Activated CD4-positive, alpha-beta T cell treated with anti-CD3 and anti-CD28 coated beads for 36 hours (primary cell): ENCODE measurements at regions of chr22 and their contacts with region 1.

Region 1: GRCh38 chr22:41543854-41544670 is at the start of gene POLR3H:
- DNase-seq: peak; percentile 99
- ATAC-seq: peak; percentile 99
- H3K4me3 Mint-ChIP-seq: peak within 1 kb of the TSS; percentile 81
- H3K27ac Mint-ChIP-seq: peak within 1 kb of the TSS; percentile 90
- H3K4me1 Mint-ChIP-seq: peaks cover 40% of the 10 kb centered on the region
- H3K27me3 Mint-ChIP-seq: no peaks in the 10 kb centered on the region
- total RNA-seq, gene POLR3H: 18.3 to 24.6 TPM

Region 2: DNA sequence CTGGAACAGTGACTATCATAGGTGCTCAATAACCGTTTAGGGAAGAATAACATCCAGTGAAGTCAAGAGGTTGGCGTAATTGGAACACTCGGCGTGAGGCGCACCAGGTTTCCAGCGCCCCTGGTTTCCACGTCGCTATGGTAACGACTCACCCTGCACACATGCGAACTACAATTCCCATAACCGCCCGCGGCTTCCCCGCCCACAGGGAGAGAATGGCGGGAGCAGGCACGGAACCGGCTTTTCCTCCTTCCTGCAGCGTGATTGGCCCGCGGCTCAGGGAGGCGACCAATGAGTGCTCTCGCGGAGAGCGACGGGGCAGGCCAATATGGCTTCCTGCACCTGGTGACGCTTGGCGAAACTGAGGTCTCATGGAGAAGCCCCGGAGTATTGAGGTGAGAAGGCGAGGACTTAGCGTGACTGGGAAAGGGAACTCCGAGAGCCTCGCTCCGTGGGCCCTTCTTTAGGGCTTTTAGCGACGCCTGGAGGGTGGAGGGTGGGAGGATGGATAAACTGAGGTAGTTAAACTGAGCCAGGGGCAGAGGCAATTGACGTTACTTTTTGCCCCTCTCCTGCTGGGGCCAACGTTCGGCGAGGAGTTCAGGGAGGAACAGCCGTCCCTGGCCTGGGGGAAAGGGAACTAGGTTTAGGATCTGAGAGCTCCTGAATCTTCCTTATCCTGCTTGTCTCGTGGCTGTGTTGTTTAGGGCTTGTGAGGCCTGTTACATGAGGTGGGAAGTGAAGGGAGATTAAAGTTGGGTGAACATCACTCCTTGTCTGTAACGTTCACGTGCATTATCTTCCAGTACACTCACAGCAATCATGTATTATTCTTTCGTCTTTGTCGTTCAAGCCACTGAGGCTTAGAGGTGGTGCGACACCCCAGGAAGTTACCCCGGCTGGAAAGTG is 338.8 kb before region 1 on chr22 and contains the start of gene L3MBTL2:
- CTCF ChIA-PET with region 1: no interaction called
- POLR2A ChIA-PET with region 1: no interaction called
- intact Hi-C with region 1: loop called in 1 of 2 experiments (anchors 1 kb)
- DNase-seq: peak; percentile 100
- ATAC-seq: peak; percentile 100
- H3K4me3 Mint-ChIP-seq: peak within 1 kb of the TSS; percentile 86
- H3K27ac Mint-ChIP-seq: peak within 1 kb of the TSS; percentile 89
- H3K4me1 Mint-ChIP-seq: peaks cover 20% of the 10 kb centered on the region
- H3K27me3 Mint-ChIP-seq: peaks cover 10% of the 10 kb centered on the region
- total RNA-seq, gene L3MBTL2: 24.4 to 25.1 TPM

Region 3: GRCh38 chr22:41488076-41488475 is 56.0 kb before region 1 on chr22:
- CTCF ChIA-PET with region 1: no interaction called
- POLR2A ChIA-PET with region 1: interaction called, 13 read pairs
- intact Hi-C with region 1: no loop called
- DNase-seq: no peak
- ATAC-seq: no peak
- H3K4me3 Mint-ChIP-seq: no peak overlapping the region
- H3K27ac Mint-ChIP-seq: peak overlapping the region; percentile 7
- H3K4me1 Mint-ChIP-seq: peaks cover 17% of the 10 kb centered on the region
- H3K27me3 Mint-ChIP-seq: no peaks in the 10 kb centered on the region

Region 4: DNA sequence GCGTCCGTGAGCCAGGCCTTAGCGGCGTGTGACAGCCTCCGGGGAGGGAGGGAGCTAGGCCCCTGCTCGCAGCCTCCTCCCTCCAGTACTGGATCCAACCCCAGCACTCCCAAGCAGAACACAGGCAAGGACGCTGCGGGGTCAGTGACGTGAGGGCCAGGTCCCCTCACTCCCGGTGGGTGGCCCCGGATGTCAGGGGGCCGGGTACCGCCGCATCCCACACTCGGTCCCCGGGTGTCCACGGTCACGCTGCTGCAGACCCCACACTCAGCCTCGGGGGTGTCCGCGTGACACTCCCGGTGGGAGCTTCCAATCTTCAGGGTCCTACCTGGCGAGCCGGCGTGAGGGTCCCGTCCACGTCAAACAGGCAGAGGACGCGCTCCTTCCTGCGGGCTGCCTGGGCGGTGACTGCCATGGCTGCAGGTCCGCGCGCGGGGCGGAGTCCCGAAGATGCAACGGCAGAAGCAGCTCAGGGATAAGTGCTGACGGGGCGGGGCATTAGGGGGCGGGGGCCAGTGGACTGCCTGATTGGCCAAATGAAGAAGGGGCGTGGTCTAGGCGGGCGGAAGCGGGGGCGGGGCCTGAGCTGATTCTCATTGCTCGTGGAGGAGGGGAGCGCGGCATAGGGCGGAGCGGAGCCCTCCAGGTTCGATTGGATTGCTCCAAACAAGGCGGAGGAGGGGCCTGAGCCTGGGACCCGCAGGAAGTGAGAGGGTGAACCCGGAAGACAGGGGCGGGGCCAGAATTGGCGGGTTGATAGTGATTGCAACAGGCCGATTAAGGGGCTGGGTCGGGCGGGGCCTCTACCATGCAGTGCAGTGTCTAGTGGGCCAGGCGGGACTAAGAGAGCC is 45.6 kb after region 1 on chr22 and contains the start of gene PMM1:
- CTCF ChIA-PET with region 1: no interaction called
- POLR2A ChIA-PET with region 1: interaction called, 3 read pairs
- intact Hi-C with region 1: loop called (anchors 1 kb)
- DNase-seq: peak; percentile 100
- ATAC-seq: peak; percentile 99
- H3K4me3 Mint-ChIP-seq: peak within 1 kb of the TSS; percentile 88
- H3K27ac Mint-ChIP-seq: peak within 1 kb of the TSS; percentile 85
- H3K4me1 Mint-ChIP-seq: peaks cover 15% of the 10 kb centered on the region
- H3K27me3 Mint-ChIP-seq: no peaks in the 10 kb centered on the region
- total RNA-seq, gene PMM1: 30.4 to 37.4 TPM

Region 5: GRCh38 chr22:41688365-41689211 is 144.5 kb after region 1 on chr22 and contains the start of gene SNU13:
- CTCF ChIA-PET with region 1: no interaction called
- POLR2A ChIA-PET with region 1: no interaction called
- intact Hi-C with region 1: loop called in 1 of 2 experiments (anchors 1 kb)
- DNase-seq: peak; percentile 96
- ATAC-seq: peak; percentile 93
- H3K4me3 Mint-ChIP-seq: peak within 1 kb of the TSS; percentile 98
- H3K27ac Mint-ChIP-seq: peak within 1 kb of the TSS; percentile 98
- H3K4me1 Mint-ChIP-seq: peaks cover 34% of the 10 kb centered on the region
- H3K27me3 Mint-ChIP-seq: no peaks in the 10 kb centered on the region
- total RNA-seq, gene SNU13: 275 to 281 TPM